AG04450 (cell line): ENCODE measurements at regions of chr18 and their contacts with region 1.

Region 1: GRCh38 chr18:55477499-55477859 is 110.5 kb downstream of the TCF4 start:
- DNase-seq: no peak
- H3K4me3 ChIP-seq: peak overlapping the region; percentile 67
- H3K27ac ChIP-seq: peak overlapping the region; percentile 69
- H3K27me3 ChIP-seq: no peaks in the 10 kb centered on the region
- CTCF ChIP-seq: peak; percentile 26

Region 2: GRCh38 chr18:55405893-55406406 is 71.5 kb before region 1 on chr18:
- CTCF ChIA-PET with region 1: no interaction called
- POLR2A ChIA-PET with region 1: interaction called, 14 read pairs
- DNase-seq: peak; percentile 81
- H3K4me3 ChIP-seq: peak overlapping the region; percentile 51
- H3K27ac ChIP-seq: peak overlapping the region; percentile 49
- H3K27me3 ChIP-seq: no peaks in the 10 kb centered on the region
- CTCF ChIP-seq: peak; percentile 35; the same call in 1 of the 2 replicates